ENCODE measurements at regions of chr7 and their contacts with region 1.

Region 1: DNA sequence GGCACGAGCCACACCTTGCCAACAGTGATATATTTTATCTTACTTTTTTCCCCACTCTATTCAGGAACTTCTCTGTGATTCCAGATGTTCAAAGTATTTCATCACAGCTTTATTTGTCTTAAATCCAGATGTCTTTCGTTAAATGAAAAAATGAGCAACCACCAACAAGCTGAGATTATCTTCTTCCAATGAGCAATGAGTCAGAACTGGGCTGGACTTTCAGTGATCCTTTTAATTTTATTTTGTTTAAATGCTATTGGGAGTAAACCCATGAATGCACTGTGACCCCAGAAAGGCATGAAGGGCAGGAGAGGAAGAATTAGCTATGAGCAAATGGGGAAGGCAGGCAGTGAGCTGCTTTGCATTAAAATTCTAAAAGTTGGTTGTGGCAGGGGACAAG is 77.6 kb upstream of the IMMP2L start:
- DNase-seq: peak; percentile 50
- H3K4me3 ChIP-seq: no peak overlapping the region
- H3K27ac ChIP-seq: no peak overlapping the region
- H3K4me1 ChIP-seq: peaks cover 9% of the 10 kb centered on the region
- H3K27me3 ChIP-seq: no peaks in the 10 kb centered on the region
- CTCF ChIP-seq: no peak

Region 2: GRCh38 chr7:112381311-112382091 is 741.6 kb after region 1 on chr7:
- CTCF ChIA-PET with region 1: no interaction called
- POLR2A ChIA-PET with region 1: interaction called, 12 read pairs
- intact Hi-C with region 1: no loop called
- DNase-seq: no peak
- H3K4me3 ChIP-seq: no peak overlapping the region
- H3K27ac ChIP-seq: no peak overlapping the region
- H3K4me1 ChIP-seq: no peaks in the 10 kb centered on the region
- H3K27me3 ChIP-seq: no peaks in the 10 kb centered on the region
- CTCF ChIP-seq: no peak

Measured in A673 (cell line).